Prostate gland (tissue), 2 donors: ENCODE measurements at regions of chr14 and their contacts with region 1.

Region 1: GRCh38 chr14:55707365-55707804 is 127.4 kb downstream of the KTN1 start:
- DNase-seq: peak; percentile 51
- H3K4me3 ChIP-seq: no peak overlapping the region
- H3K27ac ChIP-seq: no peak overlapping the region
- H3K4me1 ChIP-seq: no peaks in the 10 kb centered on the region
- H3K27me3 ChIP-seq: no peaks in the 10 kb centered on the region
- CTCF ChIP-seq: peak in 3 of 4 experiments; percentile 47 to 83 (median 76)
- POLR2A ChIP-seq: no peak

Region 2: DNA sequence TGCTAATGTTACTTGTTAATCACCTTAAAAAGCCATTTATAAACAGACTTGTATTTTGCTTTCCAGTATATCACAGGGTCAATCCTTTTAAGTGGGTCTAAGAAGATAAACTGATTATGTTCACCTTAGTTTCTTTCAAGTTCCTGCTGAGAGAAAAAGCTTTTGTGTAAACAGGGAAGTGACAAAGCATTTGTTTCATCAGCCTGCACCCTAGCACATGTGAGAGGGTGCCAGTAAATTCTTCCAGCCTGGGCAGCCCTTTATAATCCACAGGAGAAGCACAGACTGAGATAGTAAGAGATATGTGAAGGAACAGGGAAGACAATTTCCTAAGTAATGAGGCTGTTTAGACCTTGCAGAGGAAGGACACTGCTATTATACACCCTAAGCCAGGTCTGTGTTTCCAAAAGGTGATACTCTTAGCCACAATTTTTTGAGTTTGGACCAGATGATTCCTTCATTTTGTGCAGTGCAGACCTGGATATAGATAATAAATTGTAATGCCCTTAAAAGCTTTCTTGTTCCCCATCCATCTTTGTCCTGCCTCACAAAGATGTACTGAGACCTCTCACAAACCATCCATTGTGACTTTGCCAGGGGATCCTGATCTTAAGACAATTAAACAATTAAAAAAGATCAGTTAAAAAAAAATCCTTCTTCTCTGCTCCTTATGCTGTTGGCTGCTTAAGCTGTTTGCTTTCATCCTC is 23.4 kb after region 1 on chr14:
- intact Hi-C with region 1: no loop called
- DNase-seq: peak; percentile 27
- H3K4me3 ChIP-seq: no peak overlapping the region
- H3K27ac ChIP-seq: no peak overlapping the region
- H3K4me1 ChIP-seq: no peaks in the 10 kb centered on the region
- H3K27me3 ChIP-seq: no peaks in the 10 kb centered on the region
- CTCF ChIP-seq: no peak
- POLR2A ChIP-seq: no peak

Region 3: DNA sequence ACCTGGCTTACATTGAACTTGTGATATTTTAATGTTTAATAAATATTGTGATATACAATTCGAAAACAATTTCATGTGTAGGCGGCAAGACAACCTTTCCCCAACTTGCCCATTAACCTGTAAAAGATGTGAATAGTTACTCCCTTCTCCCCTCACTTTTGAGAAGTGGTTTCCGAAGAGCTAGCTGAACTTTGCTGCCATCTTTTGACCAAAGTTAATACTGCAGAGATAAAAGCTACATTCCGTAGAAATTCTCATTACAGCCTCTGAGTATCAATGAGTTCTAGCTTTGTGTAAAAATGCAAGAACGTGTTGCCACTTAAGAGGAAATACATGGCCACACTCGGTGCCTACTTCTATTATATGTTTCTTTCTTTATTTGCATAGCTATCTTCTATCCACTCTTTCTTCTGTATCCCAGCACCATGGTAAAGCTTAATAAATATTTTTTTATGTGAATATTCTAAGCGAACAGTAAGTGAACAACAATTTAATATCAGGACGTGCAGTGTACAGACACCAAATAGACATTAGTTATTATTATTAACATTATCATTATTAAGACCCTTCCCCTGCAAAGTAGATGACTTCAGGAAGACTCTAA is 767.1 kb after region 1 on chr14:
- intact Hi-C with region 1: loop called (anchors 5 kb)
- DNase-seq: no peak
- H3K4me3 ChIP-seq: no peak overlapping the region
- H3K27ac ChIP-seq: no peak overlapping the region
- H3K4me1 ChIP-seq: no peaks in the 10 kb centered on the region
- H3K27me3 ChIP-seq: no peaks in the 10 kb centered on the region
- CTCF ChIP-seq: peak in 3 of 4 experiments; percentile 49 to 75 (median 69)
- POLR2A ChIP-seq: no peak